ENCODE measurements at regions of chr6 and their contacts with region 1.

Region 1: DNA sequence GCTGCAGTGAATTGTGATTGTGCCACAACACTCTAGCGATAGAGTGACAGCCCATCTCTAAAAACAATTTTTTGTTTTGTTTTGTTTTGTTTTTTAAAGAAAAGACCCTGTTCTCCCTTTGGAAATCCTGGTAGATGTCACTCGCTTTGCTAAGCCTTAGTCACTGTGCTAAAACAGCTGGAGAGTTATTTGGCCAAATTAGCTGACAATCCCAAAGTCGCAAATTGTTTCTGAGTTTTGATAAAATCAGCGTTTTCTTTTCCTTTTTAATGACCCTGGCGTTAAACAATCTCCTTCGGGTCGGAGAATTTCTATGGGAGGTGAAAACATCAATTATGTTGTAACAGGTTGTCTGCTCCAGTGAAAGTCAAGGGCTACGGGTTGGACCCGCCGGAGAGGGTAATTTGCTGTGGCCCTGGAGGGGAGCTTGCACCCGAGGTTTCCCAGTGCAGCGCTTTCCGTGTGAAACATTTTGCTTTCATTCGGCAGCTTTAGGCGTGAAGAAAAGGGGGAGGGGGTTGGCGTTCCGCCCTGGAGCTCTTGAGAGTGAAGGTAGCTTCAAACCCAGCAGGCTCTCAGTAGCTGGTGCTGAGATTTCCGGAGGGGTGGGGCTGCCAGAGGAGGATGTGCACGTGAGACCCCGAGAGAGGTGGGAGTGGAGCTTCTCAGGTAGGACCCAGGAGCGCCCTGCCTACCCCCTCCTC is 296.6 kb downstream of the PHACTR1 start:
- DNase-seq: peak; percentile 29 to 91 (median 58)

Region 2: GRCh38 chr6:11618533-11618932 is 1394.6 kb before region 1 on chr6:
- intact Hi-C with region 1: no loop called
- DNase-seq: no peak

Region 3: GRCh38 chr6:12957321-12958051 is 55.6 kb before region 1 on chr6:
- intact Hi-C with region 1: loop called (anchors 5 kb)
- DNase-seq: peak; percentile 60 to 96 (median 70)

Measured in posterior cingulate gyrus (tissue), 11 donors.